ENCODE measurements at regions of chr11 and their contacts with region 1.

Region 1: DNA sequence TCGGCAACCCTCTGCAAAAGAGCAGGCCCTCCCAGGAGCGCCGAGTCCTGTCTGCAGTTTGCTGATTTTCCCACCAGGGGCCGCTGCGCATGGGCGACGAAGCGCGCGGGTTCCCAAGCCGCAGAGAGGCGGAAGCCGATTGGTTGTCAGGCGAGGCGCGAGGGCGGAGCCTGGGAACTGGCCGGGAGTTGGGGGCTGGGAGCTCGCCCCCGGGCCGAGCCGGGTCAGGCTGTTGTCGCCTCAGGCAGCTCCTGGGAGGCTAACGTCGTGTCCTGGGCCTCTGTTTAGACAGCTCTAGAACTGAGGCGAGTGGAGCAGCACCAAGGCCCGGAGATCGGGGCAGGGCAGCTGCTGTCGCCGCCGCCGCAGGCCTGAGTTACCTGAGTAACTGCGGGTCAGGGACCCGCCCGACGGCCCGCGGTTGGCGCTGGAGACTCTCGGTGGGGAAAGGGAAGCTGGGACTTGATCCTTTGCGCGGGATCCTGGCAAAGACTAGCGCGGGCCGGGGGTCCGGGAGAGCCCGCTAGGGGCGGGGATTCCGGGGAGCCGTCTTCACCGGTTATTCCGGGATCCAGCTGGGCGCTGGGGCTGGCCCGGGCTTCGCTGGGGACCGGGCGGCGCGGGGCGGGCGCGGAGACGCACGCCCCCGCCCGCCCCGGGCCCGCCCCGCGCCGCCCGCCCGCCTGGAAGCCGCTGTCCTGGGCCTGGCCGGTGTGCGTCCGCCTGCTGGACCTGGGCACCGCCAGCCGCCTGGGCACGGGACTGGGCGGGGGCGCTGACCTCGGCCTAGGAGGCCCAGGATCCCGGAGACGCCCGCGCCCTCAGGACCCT is at the start of gene STIM1:
- DNase-seq: peak; percentile 98
- H3K4me3 Mint-ChIP-seq: peak within 1 kb of the TSS; percentile 98
- H3K27ac Mint-ChIP-seq: peak within 1 kb of the TSS; percentile 99
- H3K4me1 Mint-ChIP-seq: peaks cover 67% of the 10 kb centered on the region
- H3K27me3 Mint-ChIP-seq: no peaks in the 10 kb centered on the region
- total RNA-seq, gene STIM1: 61.7 and 68.0 TPM in 2 replicates

Region 2: DNA sequence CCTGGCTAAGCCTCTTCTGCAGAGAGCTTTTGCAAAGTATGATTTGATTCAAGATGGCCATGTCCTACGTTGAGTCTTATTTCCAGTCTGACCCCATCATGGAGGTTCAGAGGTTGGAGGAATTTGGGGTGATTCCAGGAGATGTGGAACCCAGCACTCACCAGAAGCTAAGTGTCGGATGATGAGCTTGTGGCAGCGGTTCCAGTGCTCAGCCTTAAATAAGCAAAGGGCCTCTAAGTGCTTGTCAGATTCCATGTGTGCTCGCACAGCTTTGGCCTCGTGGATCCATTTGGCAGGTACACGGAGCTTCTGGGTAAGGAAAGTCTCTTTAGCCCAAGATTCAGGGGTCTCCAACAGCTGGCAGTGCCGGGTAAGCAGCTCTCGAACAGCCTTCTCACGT is 172.2 kb before region 1 on chr11:
- intact Hi-C with region 1: no loop called
- DNase-seq: no peak
- H3K4me3 Mint-ChIP-seq: no peak overlapping the region
- H3K27ac Mint-ChIP-seq: no peak overlapping the region
- H3K4me1 Mint-ChIP-seq: peaks cover 9% of the 10 kb centered on the region
- H3K27me3 Mint-ChIP-seq: no peaks in the 10 kb centered on the region

Region 3: GRCh38 chr11:3797329-3798095 is 57.7 kb before region 1 on chr11 and contains the start of gene NUP98:
- intact Hi-C with region 1: loop called (anchors 1 kb)
- DNase-seq: peak; percentile 100
- H3K4me3 Mint-ChIP-seq: peak within 1 kb of the TSS; percentile 99
- H3K27ac Mint-ChIP-seq: peak within 1 kb of the TSS; percentile 95
- H3K4me1 Mint-ChIP-seq: peaks cover 35% of the 10 kb centered on the region
- H3K27me3 Mint-ChIP-seq: no peaks in the 10 kb centered on the region
- total RNA-seq, gene NUP98: 122 and 123 TPM in 2 replicates

Region 4: DNA sequence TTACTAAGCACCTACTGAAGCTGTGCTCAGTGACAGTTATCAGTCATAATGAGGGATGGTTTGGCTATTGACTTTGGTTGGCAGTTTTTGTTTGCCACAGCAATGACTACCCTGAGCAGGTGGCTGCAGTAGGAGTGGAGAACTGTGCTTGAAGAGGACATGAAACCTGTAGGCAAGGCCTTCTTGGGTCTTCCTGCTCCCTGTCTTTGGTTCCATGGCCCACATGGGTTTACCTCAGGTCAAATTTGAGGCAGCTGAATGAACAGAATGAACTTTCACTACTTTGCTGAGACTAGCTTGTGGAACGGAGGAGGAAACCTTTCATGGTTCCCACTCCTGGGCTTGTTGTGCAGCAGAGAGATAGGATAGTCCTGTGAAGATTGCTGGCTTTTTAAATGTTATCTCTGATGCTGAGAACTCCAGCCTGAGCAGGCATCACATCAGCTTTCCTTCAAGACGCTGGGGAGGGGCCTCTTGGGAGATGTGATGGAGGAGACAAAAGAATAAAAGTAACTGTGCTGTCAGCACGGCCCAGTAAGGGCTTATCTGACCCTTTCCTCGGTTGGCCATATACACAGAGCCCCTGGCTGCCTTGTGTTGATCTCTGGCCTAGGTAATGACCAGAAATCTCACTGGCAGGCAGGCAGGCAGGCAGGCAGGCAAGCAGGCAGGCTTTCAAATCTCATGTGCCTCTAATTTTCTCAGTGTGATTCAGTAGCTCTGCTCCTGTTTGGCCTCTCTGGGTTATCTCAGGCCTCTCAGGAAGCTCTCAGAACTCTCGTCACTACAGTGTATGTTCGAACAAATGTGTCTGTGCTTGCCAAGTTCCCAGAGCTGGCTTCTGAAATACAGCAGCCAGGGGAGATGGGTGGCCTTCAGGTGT is 12.3 kb after region 1 on chr11:
- intact Hi-C with region 1: loop called (anchors 1 kb)
- DNase-seq: no peak
- H3K4me3 Mint-ChIP-seq: peak overlapping the region; percentile 50
- H3K27ac Mint-ChIP-seq: peak overlapping the region; percentile 78
- H3K4me1 Mint-ChIP-seq: peaks cover 79% of the 10 kb centered on the region
- H3K27me3 Mint-ChIP-seq: no peaks in the 10 kb centered on the region

Region 5: DNA sequence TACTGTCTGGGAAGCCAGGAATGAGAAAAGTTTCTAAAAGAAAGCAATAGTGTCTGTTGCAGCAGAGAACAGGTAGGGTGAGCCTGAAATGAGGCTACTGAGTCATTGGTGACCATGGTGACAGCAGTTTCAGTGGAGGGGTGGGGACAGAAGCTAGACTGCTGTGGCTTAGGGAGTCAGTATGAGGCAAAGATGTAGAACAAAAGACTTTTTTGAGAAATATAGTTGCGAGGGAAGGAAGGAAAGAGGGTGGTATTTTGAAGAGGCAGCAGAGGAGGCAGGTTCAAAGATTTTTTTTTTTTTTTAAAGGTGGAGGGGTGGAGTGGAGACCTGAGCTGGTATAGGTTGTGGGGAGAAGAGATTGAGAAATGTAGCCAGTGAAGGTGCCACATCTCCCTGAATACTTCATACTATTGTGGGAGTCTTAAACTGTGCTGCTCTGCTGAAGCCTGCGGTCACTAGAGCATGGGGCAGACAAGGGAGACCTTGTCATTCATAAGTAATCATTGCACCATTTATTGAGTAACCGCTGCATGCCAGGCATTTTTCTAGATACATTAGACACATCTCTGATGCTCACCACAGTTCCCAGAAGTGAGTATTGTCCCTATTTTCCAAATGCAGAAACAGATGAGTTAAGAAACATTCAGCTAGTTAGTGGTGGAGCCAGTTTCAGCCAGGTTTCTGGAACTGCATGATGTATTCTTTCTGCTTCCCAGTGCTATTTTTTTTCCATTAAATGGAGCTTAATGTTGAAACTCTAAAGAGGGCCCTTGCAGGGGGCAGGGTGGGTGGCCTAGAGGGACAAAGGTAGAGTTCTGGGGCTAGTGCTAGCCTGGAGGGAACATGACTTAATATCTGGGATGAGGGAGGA is 50.1 kb after region 1 on chr11:
- intact Hi-C with region 1: loop called (anchors 1 kb)
- DNase-seq: peak; percentile 54
- H3K4me3 Mint-ChIP-seq: peak overlapping the region; percentile 48
- H3K27ac Mint-ChIP-seq: peak overlapping the region; percentile 76
- H3K4me1 Mint-ChIP-seq: peaks cover 61% of the 10 kb centered on the region
- H3K27me3 Mint-ChIP-seq: no peaks in the 10 kb centered on the region

Region 6: GRCh38 chr11:3971756-3972404 is 116.7 kb after region 1 on chr11:
- intact Hi-C with region 1: loop called (anchors 1 kb)
- DNase-seq: no peak
- H3K4me3 Mint-ChIP-seq: no peak overlapping the region
- H3K27ac Mint-ChIP-seq: no peak overlapping the region
- H3K4me1 Mint-ChIP-seq: peaks cover 63% of the 10 kb centered on the region
- H3K27me3 Mint-ChIP-seq: no peaks in the 10 kb centered on the region

Region 7: DNA sequence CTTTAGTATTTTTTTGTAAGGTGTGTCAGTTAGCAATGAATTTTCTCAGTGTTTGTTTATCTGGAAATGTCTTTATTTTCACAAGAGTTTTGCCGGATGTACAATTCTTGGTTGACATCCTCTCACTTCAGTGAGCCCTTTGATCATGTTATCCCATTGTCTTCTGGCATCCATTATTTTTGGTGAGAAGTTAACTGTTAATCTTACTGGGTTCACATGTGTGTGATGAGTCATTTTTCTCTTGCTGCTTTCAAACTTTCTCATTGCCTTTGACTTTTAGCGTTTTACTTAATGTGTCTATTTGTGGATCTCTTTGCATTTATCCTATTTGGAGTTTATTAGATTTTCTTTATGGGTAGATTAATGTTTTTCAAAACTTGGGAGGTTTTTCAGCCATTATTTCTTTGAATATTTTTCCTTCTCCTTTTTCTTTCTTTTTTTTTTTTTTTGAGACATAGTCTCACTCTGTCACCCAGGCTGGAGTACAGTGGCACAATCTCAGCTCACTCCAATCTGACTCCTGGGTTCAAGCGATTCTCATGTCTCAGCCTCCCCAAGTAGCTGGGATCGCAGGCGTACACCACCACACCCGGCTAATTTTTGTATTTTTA is 138.9 kb after region 1 on chr11:
- intact Hi-C with region 1: loop called (anchors 1 kb)
- DNase-seq: no peak
- H3K4me3 Mint-ChIP-seq: no peak overlapping the region
- H3K27ac Mint-ChIP-seq: peak overlapping the region; percentile 31
- H3K4me1 Mint-ChIP-seq: peaks cover 37% of the 10 kb centered on the region
- H3K27me3 Mint-ChIP-seq: no peaks in the 10 kb centered on the region

Region 8: DNA sequence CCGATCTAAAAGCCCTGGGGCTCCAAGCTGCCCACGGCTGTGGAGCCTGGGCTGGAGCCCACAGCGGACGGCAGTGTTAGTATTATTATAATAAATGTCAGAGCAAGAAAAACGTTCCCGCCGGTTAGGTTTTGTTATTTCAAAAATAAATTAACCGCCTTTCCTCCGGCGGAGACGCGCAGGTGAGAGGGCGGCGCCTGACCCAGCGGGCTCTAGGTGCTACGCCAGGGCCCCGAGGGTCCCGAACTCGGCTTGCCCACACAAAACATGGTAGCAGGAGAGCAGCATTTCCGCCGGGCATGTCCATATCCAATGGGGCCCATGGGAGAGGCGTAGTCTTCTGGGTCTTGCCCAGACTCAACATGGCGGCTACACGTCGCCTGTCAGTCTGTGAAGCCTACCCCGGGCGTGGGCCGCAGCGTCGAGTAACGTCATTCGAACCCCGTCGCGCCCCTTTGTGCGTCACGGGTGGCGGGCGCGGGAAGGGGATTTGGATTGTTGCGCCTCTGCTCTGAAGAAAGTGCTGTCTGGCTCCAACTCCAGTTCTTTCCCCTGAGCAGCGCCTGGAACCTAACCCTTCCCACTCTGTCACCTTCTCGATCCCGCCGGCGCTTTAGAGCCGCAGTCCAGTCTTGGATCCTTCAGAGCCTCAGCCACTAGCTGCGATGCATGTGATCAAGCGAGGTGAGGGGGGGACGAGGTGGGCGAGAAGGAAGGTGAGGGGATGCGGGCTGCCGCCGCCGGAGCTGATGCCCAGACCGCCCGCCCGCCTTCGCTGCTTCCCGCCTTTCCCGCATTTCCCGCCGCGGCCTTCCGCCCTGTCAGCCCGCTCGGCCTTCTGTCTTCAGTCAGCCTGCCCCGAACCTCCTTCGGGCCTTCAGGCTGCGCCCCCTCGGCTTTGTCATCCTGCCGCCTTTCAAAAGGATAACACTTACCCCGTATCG is 239.4 kb after region 1 on chr11 and contains the start of gene RRM1:
- intact Hi-C with region 1: loop called (anchors 1 kb)
- DNase-seq: peak; percentile 93
- H3K4me3 Mint-ChIP-seq: peak within 1 kb of the TSS; percentile 96
- H3K27ac Mint-ChIP-seq: peak within 1 kb of the TSS; percentile 97
- H3K4me1 Mint-ChIP-seq: peaks cover 76% of the 10 kb centered on the region
- H3K27me3 Mint-ChIP-seq: no peaks in the 10 kb centered on the region
- total RNA-seq, gene RRM1: 155 and 173 TPM in 2 replicates

Region 9: DNA sequence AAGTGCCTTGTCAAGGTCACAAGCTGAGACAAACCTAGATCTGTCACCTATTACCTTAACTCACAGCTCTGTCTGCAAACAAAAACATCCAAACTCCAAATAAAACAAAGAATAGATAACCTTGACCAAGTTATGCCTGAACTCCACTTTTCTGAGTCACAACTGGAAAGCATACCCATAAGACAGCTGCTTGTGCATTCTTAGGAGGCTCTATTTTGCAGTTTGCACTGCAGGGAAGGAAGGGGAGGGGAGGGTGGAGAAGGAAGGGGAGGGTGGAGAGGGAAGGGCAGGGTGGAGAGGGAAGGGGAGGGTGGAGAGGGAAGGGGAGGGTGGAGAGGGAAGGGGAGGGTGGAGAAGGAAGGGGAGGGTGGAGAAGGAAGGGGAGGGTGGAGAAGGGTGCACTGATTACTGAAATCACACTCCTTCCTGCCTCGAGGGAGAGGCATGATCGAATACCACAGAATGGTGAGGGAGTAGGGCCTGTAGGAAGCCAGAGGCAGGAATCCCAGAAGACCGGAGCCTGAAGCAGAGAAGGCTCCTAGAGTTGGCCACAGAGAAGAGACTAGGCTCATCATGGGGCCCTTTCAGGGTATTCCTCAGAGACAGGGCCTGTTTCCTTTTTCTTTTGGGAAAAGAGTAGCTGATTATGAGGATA is 588.2 kb after region 1 on chr11:
- intact Hi-C with region 1: no loop called
- DNase-seq: no peak
- H3K4me3 Mint-ChIP-seq: no peak overlapping the region
- H3K27ac Mint-ChIP-seq: no peak overlapping the region
- H3K4me1 Mint-ChIP-seq: no peaks in the 10 kb centered on the region
- H3K27me3 Mint-ChIP-seq: no peaks in the 10 kb centered on the region